ENCODE measurements at regions of chr17 and their contacts with region 1.

Region 1: DNA sequence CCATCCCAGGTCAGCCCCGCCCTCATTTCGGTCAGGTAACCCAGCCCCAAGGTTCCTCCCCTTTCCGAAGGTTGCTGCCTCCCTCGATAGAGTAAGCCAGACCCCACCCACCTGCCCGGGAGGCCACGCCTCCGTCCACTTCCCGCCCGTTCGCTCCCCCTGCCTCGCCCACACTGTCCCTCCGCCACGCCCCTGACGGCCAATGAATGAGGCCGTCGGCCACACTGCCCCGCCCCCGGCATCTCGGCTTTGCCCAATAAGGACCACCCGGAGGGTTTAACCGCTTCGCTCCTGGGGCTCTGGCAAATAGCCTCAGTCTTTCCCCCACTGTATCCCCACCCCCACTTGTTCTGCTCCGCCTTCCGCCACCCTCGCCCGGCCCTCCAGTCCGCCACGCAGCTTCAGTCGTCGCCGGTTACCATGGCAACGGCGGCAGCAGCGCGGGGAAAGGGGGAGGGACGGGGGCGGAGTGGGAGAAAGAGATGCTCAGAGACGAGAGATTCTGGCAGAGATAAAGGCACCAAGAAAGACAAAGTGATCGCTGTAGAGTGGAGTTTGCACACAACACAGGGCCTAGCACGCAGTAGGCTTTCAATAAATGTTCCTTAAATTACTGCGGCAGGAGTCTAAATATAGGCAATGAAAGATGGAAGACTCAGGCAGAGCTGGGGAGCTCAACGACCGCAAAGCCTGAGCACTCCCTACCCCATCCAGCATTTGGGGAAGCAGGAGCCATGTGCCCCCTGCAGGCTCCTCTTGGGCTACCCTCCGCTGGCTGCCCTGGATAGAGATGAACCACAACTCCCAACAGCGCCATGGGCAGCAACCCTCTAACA is 5.1 kb downstream of the DLG4 start:
- DNase-seq: peak; percentile 100
- H3K4me3 Mint-ChIP-seq: peak overlapping the region; percentile 96
- H3K27ac Mint-ChIP-seq: peak overlapping the region; percentile 99
- H3K4me1 Mint-ChIP-seq: peaks cover 56% of the 10 kb centered on the region
- H3K27me3 Mint-ChIP-seq: peaks cover 18% of the 10 kb centered on the region

Region 2: DNA sequence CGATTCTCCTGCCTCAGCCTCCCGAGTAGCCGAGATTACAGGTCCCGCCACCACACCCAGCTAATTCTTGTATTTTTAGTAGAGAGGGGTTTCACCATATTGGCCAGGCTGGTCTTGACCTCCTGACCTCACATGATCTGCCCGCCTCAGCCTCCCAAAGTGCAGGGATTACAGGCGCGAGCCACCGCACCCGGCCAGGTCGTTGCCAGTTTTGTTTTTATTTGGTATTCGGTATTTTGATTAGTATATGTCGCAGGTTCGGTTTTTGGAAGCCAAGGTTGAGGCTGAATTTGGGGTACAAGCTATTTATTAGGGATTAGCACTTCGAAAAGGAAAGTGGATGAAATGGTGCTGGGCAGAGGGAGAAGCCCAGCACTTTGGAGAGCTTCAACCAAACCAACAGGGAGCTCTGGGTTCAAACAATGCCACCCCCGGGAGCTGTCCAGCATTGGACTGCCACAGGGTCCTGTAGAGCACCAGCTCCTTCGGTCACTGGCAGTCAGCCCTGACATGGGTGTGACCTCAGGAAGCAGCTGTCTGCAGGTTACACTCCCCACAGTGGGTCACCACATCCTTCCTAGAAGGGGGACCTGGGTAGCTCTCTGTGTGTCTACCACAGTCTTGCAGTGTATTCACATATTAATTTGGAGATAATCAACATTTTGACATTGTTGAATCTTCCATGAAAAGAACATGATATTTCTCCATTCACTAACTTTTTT is 133.0 kb before region 1 on chr17:
- intact Hi-C with region 1: no loop called
- DNase-seq: peak; percentile 79
- H3K4me3 Mint-ChIP-seq: no peak overlapping the region
- H3K27ac Mint-ChIP-seq: no peak overlapping the region
- H3K4me1 Mint-ChIP-seq: peaks cover 20% of the 10 kb centered on the region
- H3K27me3 Mint-ChIP-seq: peaks cover 18% of the 10 kb centered on the region

Region 3: GRCh38 chr17:7234083-7234951 is 19.8 kb after region 1 on chr17 and contains the start of gene DVL2:
- intact Hi-C with region 1: loop called (anchors 1 kb)
- DNase-seq: peak; percentile 98
- H3K4me3 Mint-ChIP-seq: peak within 1 kb of the TSS; percentile 99
- H3K27ac Mint-ChIP-seq: peak within 1 kb of the TSS; percentile 94
- H3K4me1 Mint-ChIP-seq: peaks cover 47% of the 10 kb centered on the region
- H3K27me3 Mint-ChIP-seq: peaks cover 2% of the 10 kb centered on the region
- total RNA-seq, gene DVL2: 71.1 and 77.7 TPM in 2 replicates

Region 4: GRCh38 chr17:7252176-7253043 is 37.9 kb after region 1 on chr17 and contains the start of gene ELP5:
- intact Hi-C with region 1: loop called (anchors 2 kb)
- DNase-seq: peak; percentile 97
- H3K4me3 Mint-ChIP-seq: peak within 1 kb of the TSS; percentile 95
- H3K27ac Mint-ChIP-seq: peak within 1 kb of the TSS; percentile 100
- H3K4me1 Mint-ChIP-seq: peaks cover 45% of the 10 kb centered on the region
- H3K27me3 Mint-ChIP-seq: no peaks in the 10 kb centered on the region
- total RNA-seq, gene ELP5: 74.3 and 76.8 TPM in 2 replicates

Region 5: DNA sequence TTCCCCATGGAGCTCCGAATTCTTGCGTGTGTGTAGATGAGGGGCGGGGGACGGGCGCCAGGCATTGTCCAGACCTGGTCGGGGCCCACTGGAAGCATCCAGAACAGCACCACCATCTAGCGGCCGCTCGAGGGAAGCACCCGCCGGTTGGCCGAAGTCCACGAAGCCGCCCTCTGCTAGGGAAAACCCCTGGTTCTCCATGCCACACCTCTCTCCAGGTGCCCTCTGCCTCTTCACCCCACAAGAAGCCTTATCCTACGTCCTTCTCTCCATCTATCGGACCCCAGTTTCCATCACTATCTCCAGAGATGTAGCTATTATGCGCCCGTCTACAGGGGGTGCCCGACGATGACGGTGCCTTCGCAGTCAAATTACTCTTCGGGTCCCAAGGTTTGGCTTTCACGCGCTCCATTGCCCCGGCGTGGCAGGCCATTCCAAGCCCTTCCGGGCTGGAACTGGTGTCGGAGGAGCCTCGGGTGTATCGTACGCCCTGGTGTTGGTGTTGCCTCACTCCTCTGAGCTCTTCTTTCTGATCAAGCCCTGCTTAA is 346.6 kb after region 1 on chr17:
- intact Hi-C with region 1: no loop called
- DNase-seq: peak; percentile 96
- H3K4me3 Mint-ChIP-seq: peak overlapping the region; percentile 97
- H3K27ac Mint-ChIP-seq: peak overlapping the region; percentile 99
- H3K4me1 Mint-ChIP-seq: peaks cover 39% of the 10 kb centered on the region
- H3K27me3 Mint-ChIP-seq: peaks cover 2% of the 10 kb centered on the region